ENCODE measurements at regions of chr13 and their contacts with region 1.

Region 1: GRCh38 chr13:20489185-20489820 is 36.4 kb downstream of the CRYL1 start:
- DNase-seq: peak; percentile 55
- H3K4me3 ChIP-seq: no peak overlapping the region
- H3K27ac ChIP-seq: no peak overlapping the region
- H3K4me1 ChIP-seq: no peaks in the 10 kb centered on the region
- CTCF ChIP-seq: peak; percentile 84

Region 2: GRCh38 chr13:20182231-20182846 is 307.0 kb before region 1 on chr13:
- CTCF ChIA-PET with region 1: no interaction called
- POLR2A ChIA-PET with region 1: no interaction called
- intact Hi-C with region 1: loop called (anchors 1 kb)
- DNase-seq: peak; percentile 73
- H3K4me3 ChIP-seq: no peak overlapping the region
- H3K27ac ChIP-seq: no peak overlapping the region
- H3K4me1 ChIP-seq: no peaks in the 10 kb centered on the region
- CTCF ChIP-seq: peak; percentile 85

Region 3: DNA sequence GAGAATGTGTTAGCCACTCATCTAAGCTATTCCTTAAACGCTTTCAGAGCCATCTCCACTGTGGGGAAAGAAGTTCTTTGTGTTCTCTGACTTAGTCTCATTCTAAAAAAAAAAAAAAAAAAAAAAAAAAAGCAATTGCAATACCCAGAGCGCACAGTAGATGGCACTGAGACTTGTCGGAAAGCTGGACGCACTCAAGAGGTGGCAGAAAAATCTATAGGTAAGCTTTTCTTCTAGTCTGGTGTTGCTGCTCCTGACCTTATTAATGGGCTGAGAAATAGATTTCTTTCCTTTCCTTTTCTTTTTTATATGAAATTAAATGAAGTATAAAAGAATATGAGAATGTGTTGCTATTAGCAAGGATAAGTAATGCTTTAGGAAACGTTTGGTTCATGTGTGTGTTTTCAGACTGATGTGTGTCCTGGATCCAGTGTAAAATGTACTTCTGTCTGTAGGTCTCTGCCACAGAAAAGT is 291.9 kb before region 1 on chr13:
- CTCF ChIA-PET with region 1: no interaction called
- POLR2A ChIA-PET with region 1: no interaction called
- intact Hi-C with region 1: loop called (anchors 2 kb)
- DNase-seq: peak; percentile 49
- H3K4me3 ChIP-seq: no peak overlapping the region
- H3K27ac ChIP-seq: no peak overlapping the region
- H3K4me1 ChIP-seq: no peaks in the 10 kb centered on the region
- CTCF ChIP-seq: peak; percentile 71